PC-9 (cell line): ENCODE measurements at regions of chr20 and their contacts with region 1.

Region 1: GRCh38 chr20:44692932-44693476 is 22.2 kb upstream of the CCN5 start:
- DNase-seq: peak; percentile 93 to 97
- H3K4me3 ChIP-seq: no peak overlapping the region
- H3K27ac ChIP-seq: peak overlapping the region; percentile 65
- H3K4me1 ChIP-seq: peaks cover 20% of the 10 kb centered on the region
- H3K27me3 ChIP-seq: no peaks in the 10 kb centered on the region
- CTCF ChIP-seq: no peak

Region 2: DNA sequence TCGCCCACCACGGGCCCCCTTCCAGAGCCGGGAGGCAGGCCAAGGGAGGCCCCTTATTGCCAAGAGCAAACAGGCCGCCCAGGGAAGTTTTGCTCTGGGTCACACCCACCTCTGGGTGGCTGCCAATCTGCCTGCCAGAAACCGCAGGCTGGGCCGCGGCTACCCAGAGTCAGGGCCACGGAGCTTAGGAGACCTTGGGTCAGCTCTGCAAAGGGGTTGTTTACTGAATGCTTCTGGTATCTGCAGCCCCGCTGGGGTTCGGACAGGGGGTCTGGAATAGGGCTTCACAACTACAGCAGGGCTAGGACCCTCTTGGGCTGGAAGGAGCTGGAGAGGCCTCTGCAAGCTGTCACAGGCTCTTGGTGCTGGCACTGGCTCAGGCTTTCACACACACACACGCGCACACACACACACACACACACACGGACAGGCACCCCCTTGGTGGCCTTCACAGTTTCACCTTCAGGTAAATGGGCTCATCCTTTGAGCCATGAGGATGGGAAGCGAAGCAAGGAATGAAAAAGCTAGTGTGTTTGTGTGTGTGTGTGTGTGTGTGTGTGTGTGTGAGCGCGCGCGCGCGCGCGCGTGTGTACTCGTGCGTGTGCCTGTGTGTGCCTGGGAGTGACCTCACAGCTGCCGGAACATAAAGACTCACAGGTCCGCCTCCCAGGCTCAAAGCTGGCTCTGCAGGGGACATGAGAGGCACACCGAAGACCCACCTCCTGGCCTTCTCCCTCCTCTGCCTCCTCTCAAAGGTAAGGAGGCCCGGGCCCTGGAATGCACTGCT is 21.9 kb after region 1 on chr20 and contains the start of gene CCN5:
- CTCF ChIA-PET with region 1: no interaction called
- POLR2A ChIA-PET with region 1: no interaction called
- intact Hi-C with region 1: loop called (anchors 1 kb)
- DNase-seq: peak; percentile 81 to 89
- H3K4me3 ChIP-seq: no peak within 1 kb of the TSS; the same call in 1 of the 2 replicates
- H3K27ac ChIP-seq: no peak within 1 kb of the TSS
- H3K4me1 ChIP-seq: peaks cover 18% of the 10 kb centered on the region
- H3K27me3 ChIP-seq: no peaks in the 10 kb centered on the region
- CTCF ChIP-seq: no peak
- total RNA-seq, gene CCN5: 0.20 TPM in 1 of 2 replicates, not detected in the other

Region 3: DNA sequence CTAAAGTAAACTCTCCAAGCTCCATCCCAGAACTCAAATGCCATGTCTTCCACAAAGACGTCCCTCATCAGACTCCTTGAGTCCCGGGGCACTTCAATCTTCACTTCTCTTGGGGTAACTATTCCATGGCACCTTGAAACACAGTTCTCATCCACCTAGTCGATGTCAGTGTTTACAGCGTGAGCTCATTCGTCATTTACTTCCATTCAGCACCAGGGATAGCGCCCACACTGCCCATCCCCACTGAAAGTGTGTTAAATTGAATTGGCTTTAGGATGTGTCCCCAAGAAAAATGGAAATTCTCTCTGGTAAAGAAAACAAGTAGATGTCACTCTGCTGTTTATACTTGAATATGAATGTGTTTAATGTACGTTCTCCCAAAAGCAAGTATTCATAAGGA is 84.0 kb after region 1 on chr20:
- CTCF ChIA-PET with region 1: no interaction called
- POLR2A ChIA-PET with region 1: no interaction called
- intact Hi-C with region 1: no loop called
- DNase-seq: peak in 1 of 2 experiments; percentile 20
- H3K4me3 ChIP-seq: no peak overlapping the region
- H3K27ac ChIP-seq: no peak overlapping the region
- H3K4me1 ChIP-seq: no peaks in the 10 kb centered on the region
- H3K27me3 ChIP-seq: peaks cover 55% of the 10 kb centered on the region
- CTCF ChIP-seq: no peak

Region 4: DNA sequence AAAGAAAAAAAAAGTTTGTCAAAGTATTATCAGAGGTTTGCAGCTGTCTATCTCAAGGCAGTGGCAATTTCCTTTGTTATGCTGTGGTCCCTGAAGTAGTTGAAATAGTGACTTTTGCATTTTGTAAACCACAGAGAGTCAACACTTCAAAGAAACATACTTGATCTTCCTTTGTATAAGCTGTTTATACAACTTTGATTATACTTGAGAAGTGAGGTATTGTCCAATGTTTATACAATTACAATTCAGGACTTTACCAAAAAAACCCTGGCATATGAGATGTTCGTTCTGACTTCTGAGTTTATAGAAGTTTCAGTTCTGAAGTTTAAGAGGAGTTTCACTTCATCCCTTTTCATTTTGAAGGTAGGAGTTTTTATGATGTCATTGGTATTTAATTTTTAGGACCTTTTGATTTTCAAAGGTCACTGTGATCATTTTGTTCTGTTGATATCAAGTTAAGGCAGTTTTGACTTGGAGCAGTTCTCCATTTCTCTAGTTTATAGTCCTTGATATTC is 277.3 kb after region 1 on chr20:
- CTCF ChIA-PET with region 1: no interaction called
- POLR2A ChIA-PET with region 1: no interaction called
- intact Hi-C with region 1: no loop called
- DNase-seq: no peak
- H3K4me3 ChIP-seq: no peak overlapping the region
- H3K27ac ChIP-seq: no peak overlapping the region
- H3K4me1 ChIP-seq: peaks cover 25% of the 10 kb centered on the region
- H3K27me3 ChIP-seq: no peaks in the 10 kb centered on the region
- CTCF ChIP-seq: no peak